ENCODE measurements at regions of chr2 and their contacts with region 1.

Region 1: DNA sequence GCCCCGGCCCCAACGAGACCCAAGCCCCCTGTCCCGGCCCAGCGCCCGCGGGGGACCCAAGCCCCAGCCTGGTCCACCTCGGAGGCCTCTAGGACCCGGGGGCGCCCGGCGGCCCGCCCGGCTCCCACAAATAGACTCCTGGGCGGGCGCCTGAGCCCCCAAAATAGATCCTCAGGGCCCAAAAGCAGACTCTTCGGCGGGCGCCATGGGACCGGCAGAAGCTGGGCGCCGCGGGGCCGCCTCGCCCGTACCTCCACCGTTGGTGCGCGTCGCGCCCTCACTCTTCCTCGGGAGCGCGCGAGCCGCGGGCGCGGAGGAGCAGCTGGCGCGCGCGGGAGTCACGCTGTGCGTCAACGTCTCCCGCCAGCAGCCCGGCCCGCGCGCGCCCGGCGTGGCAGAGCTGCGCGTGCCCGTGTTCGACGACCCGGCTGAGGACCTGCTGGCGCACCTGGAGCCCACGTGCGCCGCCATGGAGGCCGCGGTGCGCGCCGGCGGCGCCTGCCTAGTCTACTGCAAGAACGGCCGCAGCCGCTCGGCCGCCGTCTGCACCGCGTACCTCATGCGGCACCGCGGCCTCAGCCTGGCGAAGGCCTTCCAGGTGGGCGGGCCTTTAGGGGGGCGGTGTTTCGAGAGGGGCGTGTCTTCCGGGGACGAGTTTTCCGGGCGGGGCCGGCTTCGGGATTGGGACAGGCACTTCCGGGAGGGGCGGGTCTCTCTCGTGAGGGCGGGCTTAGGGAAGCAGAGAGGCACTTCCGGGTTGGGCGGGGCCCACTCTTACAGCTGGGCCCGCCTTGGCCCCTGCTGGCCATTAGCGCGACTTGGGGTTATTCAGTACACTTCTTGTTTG is 546 bp downstream of the DUSP28 start:
- DNase-seq: peak; percentile 98 to 100 (median 100)
- ATAC-seq: peak; percentile 59
- H3K4me3 ChIP-seq: peak overlapping the region; percentile 74 to 76
- H3K4me3 Mint-ChIP-seq: peak overlapping the region; percentile 89
- H3K27ac ChIP-seq: peak overlapping the region; percentile 82 to 84
- H3K27ac Mint-ChIP-seq: peak overlapping the region; percentile 96
- H3K4me1 ChIP-seq: peaks cover 80% of the 10 kb centered on the region
- H3K4me1 Mint-ChIP-seq: peaks cover 71% of the 10 kb centered on the region
- H3K27me3 ChIP-seq: no peaks in the 10 kb centered on the region
- H3K27me3 Mint-ChIP-seq: no peaks in the 10 kb centered on the region
- CTCF ChIP-seq: no peak

Region 2: GRCh38 chr2:240579771-240580614 is 19.3 kb after region 1 on chr2:
- CTCF ChIA-PET with region 1: interaction called, 37 read pairs
- POLR2A ChIA-PET with region 1: interaction called, 88 read pairs
- intact Hi-C with region 1: no loop called
- DNase-seq: peak; percentile 53 to 89 (median 80)
- ATAC-seq: peak; percentile 94
- H3K4me3 ChIP-seq: no peak overlapping the region
- H3K4me3 Mint-ChIP-seq: peak overlapping the region; percentile 21
- H3K27ac ChIP-seq: peak overlapping the region in 1 of 2 experiments; percentile 55
- H3K27ac Mint-ChIP-seq: peak overlapping the region; percentile 86
- H3K4me1 ChIP-seq: peaks cover 30% of the 10 kb centered on the region
- H3K4me1 Mint-ChIP-seq: peaks cover 43% of the 10 kb centered on the region
- H3K27me3 ChIP-seq: no peaks in the 10 kb centered on the region
- H3K27me3 Mint-ChIP-seq: no peaks in the 10 kb centered on the region
- CTCF ChIP-seq: peak; percentile 64

Region 3: GRCh38 chr2:240832205-240832727 is 271.6 kb after region 1 on chr2:
- CTCF ChIA-PET with region 1: no interaction called
- POLR2A ChIA-PET with region 1: no interaction called
- intact Hi-C with region 1: loop called (anchors 1 kb)
- DNase-seq: peak; percentile 96 to 99 (median 99)
- ATAC-seq: peak; percentile 93
- H3K4me3 ChIP-seq: peak overlapping the region; percentile 49 to 64
- H3K4me3 Mint-ChIP-seq: no peak overlapping the region
- H3K27ac ChIP-seq: peak overlapping the region in 1 of 2 experiments; percentile 19
- H3K27ac Mint-ChIP-seq: no peak overlapping the region
- H3K4me1 ChIP-seq: peaks cover 11% of the 10 kb centered on the region
- H3K4me1 Mint-ChIP-seq: peaks cover 6% of the 10 kb centered on the region
- H3K27me3 ChIP-seq: peaks cover 4 to 9% of the 10 kb centered on the region in 2 experiments
- H3K27me3 Mint-ChIP-seq: peaks cover 12% of the 10 kb centered on the region
- CTCF ChIP-seq: no peak

Region 4: GRCh38 chr2:241217320-241218031 is 656.8 kb after region 1 on chr2:
- CTCF ChIA-PET with region 1: no interaction called
- POLR2A ChIA-PET with region 1: no interaction called
- intact Hi-C with region 1: loop called (anchors 5 to 10 kb)
- DNase-seq: peak in 5 of 9 experiments; percentile 25 to 64 (median 58)
- ATAC-seq: peak; percentile 42
- H3K4me3 ChIP-seq: peak overlapping the region; percentile 48 to 59
- H3K4me3 Mint-ChIP-seq: peak overlapping the region; percentile 77
- H3K27ac ChIP-seq: peak overlapping the region in 1 of 2 experiments; percentile 32
- H3K27ac Mint-ChIP-seq: no peak overlapping the region
- H3K4me1 ChIP-seq: peaks cover 5% of the 10 kb centered on the region
- H3K4me1 Mint-ChIP-seq: peaks cover 14% of the 10 kb centered on the region
- H3K27me3 ChIP-seq: no peaks in the 10 kb centered on the region
- H3K27me3 Mint-ChIP-seq: no peaks in the 10 kb centered on the region
- CTCF ChIP-seq: no peak

Measured in CD8-positive, alpha-beta T cell (primary cell).